ENCODE measurements at regions of chr11 and their contacts with region 1.

Region 1: DNA sequence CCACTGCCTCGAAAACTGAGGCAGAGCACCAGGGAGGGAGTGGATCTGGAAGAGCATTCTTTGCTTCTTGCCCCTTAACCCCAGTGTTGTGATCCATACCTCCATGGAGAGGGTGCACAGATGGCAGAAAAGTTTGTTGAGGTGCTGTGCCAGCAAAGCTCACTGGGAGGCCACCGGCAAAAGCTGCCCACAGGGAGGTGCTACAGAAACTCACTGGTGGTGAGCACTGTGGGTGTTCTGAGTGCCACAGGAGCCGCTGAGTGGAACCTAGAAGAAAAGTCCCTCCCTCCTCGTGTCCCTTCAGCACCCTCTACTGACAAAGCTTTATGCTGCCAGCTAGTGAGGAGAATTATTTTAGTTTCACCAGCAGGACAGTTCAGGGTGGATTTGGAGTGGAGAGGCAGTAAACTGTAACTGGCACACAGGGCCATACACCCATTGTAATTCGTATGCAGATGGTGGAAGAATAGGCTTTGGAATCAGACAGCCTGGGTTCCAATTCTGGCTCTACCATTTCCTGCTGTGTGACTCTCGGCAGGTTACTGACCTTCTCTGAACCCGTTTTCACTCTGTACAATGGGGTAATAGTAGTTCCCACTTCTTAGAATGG is 84.6 kb downstream of the SWAP70 start:
- DNase-seq: peak; percentile 77
- CTCF ChIP-seq: peak; percentile 91

Region 2: DNA sequence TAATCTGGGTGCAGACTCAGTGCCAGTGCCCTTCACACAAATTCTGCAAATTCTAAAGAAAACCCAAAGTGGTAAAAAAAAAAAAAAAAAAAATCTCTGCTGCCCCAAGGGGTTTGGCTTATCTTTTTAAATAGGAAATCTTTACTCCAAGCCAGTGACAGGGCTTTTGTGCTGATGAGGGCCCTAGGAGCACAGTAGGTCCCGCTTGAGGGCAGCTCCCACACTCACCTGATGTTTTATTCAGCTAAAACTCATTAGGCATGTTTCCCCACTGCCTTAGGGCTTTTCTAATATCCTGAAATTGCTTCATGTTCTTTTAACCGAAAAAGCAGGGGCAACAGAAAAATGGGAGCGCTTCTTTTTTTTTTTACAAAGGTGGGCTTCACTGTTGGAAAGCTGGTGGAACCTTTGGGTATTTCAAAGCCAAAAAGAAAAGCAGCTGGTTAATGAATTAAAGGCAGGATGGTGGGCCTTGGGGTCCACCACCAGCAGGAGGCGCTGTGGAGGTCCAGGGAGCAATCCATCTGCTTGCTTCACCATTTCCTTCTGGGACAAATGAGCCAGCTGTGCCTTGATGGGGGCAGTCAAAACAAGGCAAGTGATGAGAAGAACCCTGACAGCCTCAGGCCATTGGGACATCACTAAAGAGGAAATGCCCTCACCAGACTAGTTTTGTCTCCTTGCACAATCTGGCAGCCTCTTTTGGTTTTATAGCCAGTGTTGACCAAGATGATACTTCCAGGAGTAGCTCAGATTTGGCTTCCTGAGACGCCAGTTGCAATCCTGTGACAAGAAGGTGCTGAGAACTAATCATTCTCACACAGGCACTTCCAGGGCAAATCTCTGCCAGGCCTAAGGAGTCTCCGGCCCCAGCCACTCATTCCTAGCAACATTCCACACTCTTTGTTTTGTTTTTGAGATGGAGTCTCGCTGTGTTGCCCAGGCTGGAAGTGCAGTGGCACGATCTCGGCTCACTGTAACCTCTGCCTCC is 213.4 kb before region 1 on chr11:
- CTCF ChIA-PET with region 1: interaction called, 47 read pairs
- POLR2A ChIA-PET with region 1: no interaction called
- DNase-seq: peak; percentile 78
- CTCF ChIP-seq: peak; percentile 79

Region 3: GRCh38 chr11:9601037-9601875 is 147.2 kb before region 1 on chr11:
- CTCF ChIA-PET with region 1: interaction called, 12 read pairs
- POLR2A ChIA-PET with region 1: no interaction called
- DNase-seq: peak; percentile 73
- CTCF ChIP-seq: no peak

Region 4: DNA sequence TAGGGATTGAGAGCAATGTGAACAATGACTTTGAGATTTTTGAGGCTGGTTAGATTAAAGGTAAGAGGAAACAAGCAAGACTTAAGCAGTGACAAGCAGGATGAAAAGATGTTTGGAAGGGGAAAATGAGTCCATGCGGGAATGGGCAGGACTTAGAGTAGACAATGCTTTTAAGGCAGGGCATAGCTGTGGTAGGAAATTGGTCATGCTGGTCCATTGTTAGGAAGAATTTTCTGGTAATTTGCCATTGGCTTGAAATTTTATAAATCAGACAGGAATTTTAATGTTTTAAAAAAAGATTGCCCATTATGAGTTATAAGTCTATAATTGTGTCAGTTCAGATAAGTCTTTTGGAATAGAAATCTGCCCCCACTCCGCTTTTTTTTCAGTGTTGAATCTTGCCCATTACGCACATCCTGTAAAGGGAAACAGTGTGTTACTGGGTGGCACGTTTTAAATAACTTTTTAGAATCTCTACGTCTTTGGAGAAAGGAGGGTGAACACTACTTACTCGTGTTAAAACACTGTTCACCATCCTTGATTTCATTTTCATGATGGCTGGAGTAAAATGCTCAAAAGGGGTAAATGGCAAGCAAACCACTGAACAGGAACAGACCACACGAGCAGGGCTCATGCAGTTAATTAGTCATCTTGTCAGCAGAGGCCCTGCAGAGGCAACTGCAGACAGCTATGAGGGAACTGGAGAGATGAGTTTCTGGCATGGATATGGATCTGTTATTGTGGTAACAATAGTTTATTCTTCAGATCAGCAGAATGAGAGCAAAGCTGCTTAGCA is 59.6 kb before region 1 on chr11:
- CTCF ChIA-PET with region 1: interaction called, 13 read pairs
- POLR2A ChIA-PET with region 1: no interaction called
- DNase-seq: peak; percentile 45
- CTCF ChIP-seq: no peak

Region 5: DNA sequence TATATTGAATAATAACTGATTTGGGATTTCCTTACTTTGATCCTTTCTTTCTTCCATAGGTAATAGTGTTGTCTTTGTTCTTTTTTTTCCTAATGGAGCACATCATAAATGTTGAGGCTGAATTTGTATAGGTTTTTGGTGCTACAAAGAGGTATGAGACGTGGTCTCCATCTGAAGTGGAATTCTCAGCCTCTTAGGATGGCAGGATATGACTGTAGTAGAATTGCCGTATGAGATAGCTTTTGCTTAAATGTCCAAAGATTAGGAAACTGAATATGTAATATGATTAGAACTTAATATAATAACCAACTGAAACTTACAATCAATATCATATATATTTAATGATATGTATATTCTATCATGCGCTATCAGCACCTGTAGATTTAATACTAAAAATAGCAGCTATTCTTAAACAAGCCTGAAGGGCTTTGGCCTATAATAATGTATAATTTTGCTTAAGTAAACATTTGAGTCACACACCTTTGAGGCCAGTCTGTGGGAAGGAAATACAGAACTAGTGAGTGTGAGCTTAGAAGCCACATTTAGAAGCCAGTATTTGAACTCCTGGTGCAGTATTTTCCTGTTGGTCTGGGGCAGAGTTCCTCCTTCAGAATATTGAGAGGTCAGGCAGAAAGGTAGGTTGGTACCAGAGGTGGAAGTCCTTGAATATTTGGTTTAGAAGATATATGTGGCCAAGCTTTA is 22.0 kb before region 1 on chr11:
- CTCF ChIA-PET with region 1: interaction called, 94 read pairs
- POLR2A ChIA-PET with region 1: interaction called, 3 read pairs
- DNase-seq: peak; percentile 28
- CTCF ChIP-seq: no peak

Region 6: GRCh38 chr11:10307442-10308207 is 559.2 kb after region 1 on chr11:
- CTCF ChIA-PET with region 1: interaction called, 12 read pairs
- POLR2A ChIA-PET with region 1: no interaction called
- DNase-seq: peak; percentile 81
- CTCF ChIP-seq: peak; percentile 96

Measured in GM10248 (cell line).